ENCODE measurements at regions of chr18 and their contacts with region 1.

Region 1: GRCh38 chr18:6929370-6930102 is 188.1 kb downstream of the LAMA1 start:
- DNase-seq: peak; percentile 98
- H3K4me3 ChIP-seq: peak overlapping the region; percentile 55
- H3K4me3 Mint-ChIP-seq: peak overlapping the region; percentile 90
- H3K27ac Mint-ChIP-seq: peak overlapping the region; percentile 66
- H3K4me1 ChIP-seq: peaks cover 43% of the 10 kb centered on the region
- H3K4me1 Mint-ChIP-seq: peaks cover 31% of the 10 kb centered on the region
- H3K27me3 ChIP-seq: no peaks in the 10 kb centered on the region
- H3K27me3 Mint-ChIP-seq: no peaks in the 10 kb centered on the region
- CTCF ChIP-seq: no peak

Region 2: GRCh38 chr18:6948281-6949055 is 18.9 kb after region 1 on chr18:
- CTCF ChIA-PET with region 1: no interaction called
- POLR2A ChIA-PET with region 1: no interaction called
- intact Hi-C with region 1: no loop called
- DNase-seq: no peak
- H3K4me3 ChIP-seq: no peak overlapping the region
- H3K4me3 Mint-ChIP-seq: no peak overlapping the region
- H3K27ac Mint-ChIP-seq: no peak overlapping the region
- H3K4me1 ChIP-seq: peaks cover 16% of the 10 kb centered on the region
- H3K4me1 Mint-ChIP-seq: peaks cover 25% of the 10 kb centered on the region
- H3K27me3 ChIP-seq: no peaks in the 10 kb centered on the region
- H3K27me3 Mint-ChIP-seq: no peaks in the 10 kb centered on the region
- CTCF ChIP-seq: no peak

Region 3: GRCh38 chr18:7000484-7001096 is 71.1 kb after region 1 on chr18:
- CTCF ChIA-PET with region 1: no interaction called
- POLR2A ChIA-PET with region 1: no interaction called
- intact Hi-C with region 1: loop called (anchors 2 kb)
- DNase-seq: no peak
- H3K4me3 ChIP-seq: no peak overlapping the region
- H3K4me3 Mint-ChIP-seq: no peak overlapping the region
- H3K27ac Mint-ChIP-seq: no peak overlapping the region
- H3K4me1 ChIP-seq: no peaks in the 10 kb centered on the region
- H3K4me1 Mint-ChIP-seq: no peaks in the 10 kb centered on the region
- H3K27me3 ChIP-seq: no peaks in the 10 kb centered on the region
- H3K27me3 Mint-ChIP-seq: no peaks in the 10 kb centered on the region
- CTCF ChIP-seq: peak; percentile 42 to 45

Measured in Caco-2 (cell line).